PC-3 (cell line): ENCODE measurements at regions of chr2 and their contacts with region 1.

Region 1: DNA sequence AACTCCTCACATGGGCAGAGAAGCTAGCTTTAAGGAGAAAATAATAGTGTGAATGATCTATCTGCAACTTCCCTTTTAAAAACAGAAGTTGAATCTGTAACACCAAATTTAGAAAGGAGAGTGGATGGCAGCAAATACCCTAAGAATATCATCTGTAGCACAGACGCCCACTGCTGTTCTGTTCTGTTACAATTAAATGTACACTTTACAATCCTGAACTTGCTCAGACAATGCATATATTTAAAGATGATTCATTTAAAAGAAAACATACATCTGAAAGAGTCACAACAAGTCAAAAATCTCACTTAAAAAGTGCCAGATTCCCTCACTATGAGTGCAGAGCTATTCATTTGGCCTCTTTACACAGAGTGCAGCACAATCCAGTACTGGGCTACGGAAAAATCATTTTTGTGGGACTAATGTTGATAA is 8.0 kb upstream of the SERTAD2 start:
- DNase-seq: peak; percentile 42
- ATAC-seq: peak; percentile 93
- H3K4me3 ChIP-seq: no peak overlapping the region
- H3K27ac ChIP-seq: no peak overlapping the region
- H3K4me1 ChIP-seq: peaks cover 17% of the 10 kb centered on the region
- H3K27me3 ChIP-seq: no peaks in the 10 kb centered on the region
- CTCF ChIP-seq: no peak; the same call in 1 of the 2 replicates

Region 2: DNA sequence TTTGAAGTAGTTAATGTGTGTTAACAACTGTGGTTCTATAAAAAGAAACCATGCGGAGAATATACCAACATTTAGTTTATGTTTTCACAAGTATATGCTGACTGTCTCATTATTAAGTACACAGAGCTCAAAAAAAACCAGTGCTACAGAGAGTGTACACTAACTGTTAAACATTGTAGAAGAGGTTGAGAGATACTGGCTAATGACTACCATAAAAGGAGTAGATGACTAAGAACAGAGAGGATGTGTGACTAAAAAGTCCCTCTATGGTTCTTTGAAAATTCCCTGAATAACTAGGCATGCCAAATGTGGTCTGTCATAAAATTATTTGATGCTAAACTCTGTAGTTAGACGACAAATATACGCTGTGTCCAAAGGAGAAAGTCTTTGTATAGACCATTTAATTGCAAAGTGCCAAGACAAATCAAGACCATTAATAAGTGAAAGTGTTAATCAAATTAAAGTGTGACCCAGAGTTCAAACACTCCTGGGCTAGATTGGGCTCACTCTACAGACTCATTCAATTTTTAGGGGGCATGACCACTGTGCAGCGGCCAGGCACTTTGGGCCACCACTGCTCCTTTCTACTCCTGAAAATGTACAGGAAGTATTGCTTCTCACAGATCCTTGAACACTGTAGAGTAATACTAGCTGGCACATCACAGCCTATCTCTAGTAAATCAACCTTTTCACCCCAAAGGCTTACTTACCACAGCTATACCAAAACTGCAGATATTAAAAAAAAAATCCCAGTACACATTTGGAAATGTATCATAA is 37.1 kb after region 1 on chr2:
- CTCF ChIA-PET with region 1: no interaction called
- POLR2A ChIA-PET with region 1: no interaction called
- intact Hi-C with region 1: loop called (anchors 5 kb)
- DNase-seq: peak; percentile 92
- ATAC-seq: peak; percentile 98
- H3K4me3 ChIP-seq: no peak overlapping the region; the same call in 1 of the 2 replicates
- H3K27ac ChIP-seq: peak overlapping the region; percentile 60
- H3K4me1 ChIP-seq: peaks cover 23% of the 10 kb centered on the region
- H3K27me3 ChIP-seq: no peaks in the 10 kb centered on the region
- CTCF ChIP-seq: no peak